Mammary epithelial cell (primary cell): ENCODE measurements at regions of chr1 and their contacts with region 1.

Region 1: GRCh38 chr1:78184460-78185072 is 138.8 kb downstream of the GIPC2 start:
- DNase-seq: no peak
- H3K4me3 ChIP-seq: no peak overlapping the region
- H3K27ac ChIP-seq: no peak overlapping the region
- H3K4me1 ChIP-seq: no peaks in the 10 kb centered on the region
- H3K27me3 ChIP-seq: no peaks in the 10 kb centered on the region
- CTCF ChIP-seq: no peak

Region 2: DNA sequence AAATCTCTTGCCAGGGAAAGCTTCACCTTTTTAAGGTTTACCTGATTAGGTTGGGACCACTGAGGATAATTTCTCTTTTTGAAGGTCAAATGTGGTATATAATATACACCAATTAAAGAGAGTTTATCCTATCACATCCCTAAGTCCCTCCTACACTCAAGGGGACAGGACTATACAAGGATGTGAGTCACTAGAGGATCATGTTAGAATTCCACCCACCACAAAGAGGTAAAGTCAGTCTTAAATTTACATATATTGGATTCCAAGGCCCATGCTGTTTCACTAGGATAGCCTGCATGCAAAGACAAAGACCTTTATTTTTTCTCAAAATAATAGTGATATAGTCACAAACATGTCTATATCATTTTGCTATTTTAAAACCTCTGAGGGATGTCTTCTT is 25.6 kb after region 1 on chr1:
- CTCF ChIA-PET with region 1: no interaction called
- dilution Hi-C with region 1: no loop called
- in situ Hi-C with region 1: no loop called
- intact Hi-C with region 1: loop called (anchors 2 kb)
- DNase-seq: peak; percentile 39
- H3K4me3 ChIP-seq: no peak overlapping the region
- H3K27ac ChIP-seq: no peak overlapping the region
- H3K4me1 ChIP-seq: peaks cover 13% of the 10 kb centered on the region
- H3K27me3 ChIP-seq: no peaks in the 10 kb centered on the region
- CTCF ChIP-seq: no peak